Activated CD8-positive, alpha-beta T cell treated with anti-CD3 and anti-CD28 coated beads for 36 hours (primary cell): ENCODE measurements at regions of chr13 and their contacts with region 1.

Region 1: DNA sequence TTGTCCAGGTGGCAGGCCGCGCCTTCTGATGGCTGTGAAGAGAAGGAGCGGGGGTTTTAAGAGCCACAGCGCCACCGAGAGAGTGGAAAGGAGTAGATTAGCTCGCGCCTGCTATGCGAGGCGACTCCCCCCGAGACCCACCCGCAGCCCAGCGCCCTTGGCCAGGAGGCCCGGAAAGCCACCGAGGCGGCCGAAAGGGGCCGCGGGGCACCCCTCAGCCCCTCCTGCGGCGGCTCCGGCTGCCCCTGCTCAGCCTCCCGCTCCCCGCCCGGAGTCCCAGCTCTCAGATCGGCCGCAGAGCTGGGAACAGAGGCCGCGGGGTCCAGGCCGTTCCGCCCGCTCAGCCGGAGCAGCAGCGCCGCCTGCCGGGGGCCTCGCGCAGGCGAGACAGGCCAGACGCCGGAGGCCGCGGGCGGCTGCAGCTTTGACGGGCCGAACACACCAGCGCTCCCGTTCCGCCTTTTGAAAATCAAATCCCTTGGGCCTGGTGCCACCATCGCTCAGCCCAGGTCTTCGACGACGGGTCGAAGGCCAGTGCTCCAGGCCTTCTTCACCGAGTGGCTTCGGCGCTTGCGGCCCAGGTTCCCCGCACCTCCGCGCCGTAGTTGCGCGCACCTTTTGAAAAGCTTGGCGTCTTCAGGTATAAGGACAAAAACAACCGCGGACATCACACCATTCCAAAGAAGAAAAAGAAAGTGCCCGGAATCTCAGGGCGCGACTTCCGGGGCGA is 15.3 kb downstream of the CDX2 start:
- DNase-seq: peak; percentile 71
- ATAC-seq: peak; percentile 92
- H3K4me3 Mint-ChIP-seq: peak overlapping the region; percentile 69
- H3K27ac Mint-ChIP-seq: no peak overlapping the region
- H3K4me1 Mint-ChIP-seq: peaks cover 14% of the 10 kb centered on the region
- H3K27me3 Mint-ChIP-seq: peaks cover 64% of the 10 kb centered on the region
- CTCF ChIP-seq: peak; percentile 90

Region 2: DNA sequence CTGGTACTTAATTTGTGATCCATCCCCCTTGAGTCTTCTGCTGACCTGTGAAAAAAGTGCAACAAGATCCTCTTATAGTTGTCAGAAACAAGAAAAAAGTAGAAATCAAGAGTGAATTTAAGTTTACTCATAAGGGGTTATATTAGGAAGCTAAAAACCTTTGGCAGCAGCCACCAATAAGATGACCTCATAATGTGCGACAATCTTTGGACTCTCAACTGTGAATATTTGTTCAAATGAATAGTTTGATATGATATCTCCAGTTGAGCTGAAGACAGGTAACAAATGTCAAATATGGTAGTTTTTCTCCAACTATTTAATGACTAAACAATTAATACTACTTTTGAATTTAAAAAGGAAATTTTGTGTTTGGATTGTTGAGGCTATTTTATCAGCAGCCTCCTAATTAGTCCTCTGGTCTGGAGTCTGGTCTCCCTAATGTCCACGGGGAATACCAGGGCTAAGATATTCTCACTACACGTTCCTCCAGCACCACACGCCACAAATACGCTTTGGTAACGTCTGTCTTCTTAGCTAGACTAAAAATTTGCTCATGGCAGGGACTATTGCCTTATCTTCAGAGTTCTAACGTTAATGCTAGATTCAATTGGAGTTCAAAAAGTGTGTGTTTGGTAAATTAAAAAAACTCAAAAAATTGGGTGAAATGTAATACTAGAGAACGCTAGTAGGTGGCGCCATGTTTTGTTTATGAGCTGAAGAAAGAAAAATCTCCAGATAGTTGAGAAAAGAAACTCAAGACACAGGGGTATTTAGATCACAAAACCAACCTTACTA is 85.0 kb before region 1 on chr13:
- CTCF ChIA-PET with region 1: interaction called, 36 read pairs
- POLR2A ChIA-PET with region 1: no interaction called
- intact Hi-C with region 1: loop called (anchors 10 kb)
- DNase-seq: no peak
- ATAC-seq: no peak
- H3K4me3 Mint-ChIP-seq: no peak overlapping the region
- H3K27ac Mint-ChIP-seq: no peak overlapping the region
- H3K4me1 Mint-ChIP-seq: no peaks in the 10 kb centered on the region
- H3K27me3 Mint-ChIP-seq: peaks cover 22% of the 10 kb centered on the region
- CTCF ChIP-seq: peak; percentile 74

Region 3: DNA sequence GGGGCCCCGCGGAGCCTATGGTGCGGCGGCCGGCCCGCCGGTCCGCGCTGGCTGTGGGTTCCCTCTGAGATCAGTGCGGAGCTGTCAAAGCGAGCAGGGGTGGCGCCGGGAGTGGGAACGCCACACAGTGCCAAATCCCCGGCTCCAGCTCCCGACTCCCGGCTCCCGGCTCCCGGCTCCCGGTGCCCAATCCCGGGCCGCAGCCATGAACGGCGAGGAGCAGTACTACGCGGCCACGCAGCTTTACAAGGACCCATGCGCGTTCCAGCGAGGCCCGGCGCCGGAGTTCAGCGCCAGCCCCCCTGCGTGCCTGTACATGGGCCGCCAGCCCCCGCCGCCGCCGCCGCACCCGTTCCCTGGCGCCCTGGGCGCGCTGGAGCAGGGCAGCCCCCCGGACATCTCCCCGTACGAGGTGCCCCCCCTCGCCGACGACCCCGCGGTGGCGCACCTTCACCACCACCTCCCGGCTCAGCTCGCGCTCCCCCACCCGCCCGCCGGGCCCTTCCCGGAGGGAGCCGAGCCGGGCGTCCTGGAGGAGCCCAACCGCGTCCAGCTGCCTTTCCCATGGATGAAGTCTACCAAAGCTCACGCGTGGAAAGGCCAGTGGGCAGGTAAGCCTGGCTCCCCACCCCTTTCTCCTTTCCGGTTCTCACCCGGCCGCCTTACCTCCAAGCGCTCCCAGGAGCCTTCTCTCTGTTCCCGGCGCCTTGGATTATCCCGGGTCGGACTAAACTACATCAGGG is 33.7 kb before region 1 on chr13 and contains the start of gene PDX1:
- CTCF ChIA-PET with region 1: interaction called, 23 read pairs
- POLR2A ChIA-PET with region 1: no interaction called
- intact Hi-C with region 1: no loop called
- DNase-seq: peak; percentile 54
- ATAC-seq: peak; percentile 12
- H3K4me3 Mint-ChIP-seq: peak within 1 kb of the TSS; percentile 67
- H3K27ac Mint-ChIP-seq: no peak within 1 kb of the TSS
- H3K4me1 Mint-ChIP-seq: peaks cover 36% of the 10 kb centered on the region
- H3K27me3 Mint-ChIP-seq: peaks cover 77% of the 10 kb centered on the region
- CTCF ChIP-seq: no peak
- total RNA-seq, gene PDX1: not detected

Region 4: GRCh38 chr13:27926644-27927434 is 27.0 kb before region 1 on chr13:
- CTCF ChIA-PET with region 1: interaction called, 32 read pairs
- POLR2A ChIA-PET with region 1: interaction called, 5 read pairs
- intact Hi-C with region 1: no loop called
- DNase-seq: peak; percentile 24
- ATAC-seq: no peak
- H3K4me3 Mint-ChIP-seq: no peak overlapping the region
- H3K27ac Mint-ChIP-seq: no peak overlapping the region
- H3K4me1 Mint-ChIP-seq: peaks cover 30% of the 10 kb centered on the region
- H3K27me3 Mint-ChIP-seq: peaks cover 91% of the 10 kb centered on the region
- CTCF ChIP-seq: no peak

Region 5: GRCh38 chr13:27933580-27934328 is 20.1 kb before region 1 on chr13:
- CTCF ChIA-PET with region 1: interaction called, 32 read pairs
- POLR2A ChIA-PET with region 1: no interaction called
- intact Hi-C with region 1: no loop called
- DNase-seq: no peak
- ATAC-seq: no peak
- H3K4me3 Mint-ChIP-seq: no peak overlapping the region
- H3K27ac Mint-ChIP-seq: no peak overlapping the region
- H3K4me1 Mint-ChIP-seq: no peaks in the 10 kb centered on the region
- H3K27me3 Mint-ChIP-seq: peaks cover 30% of the 10 kb centered on the region
- CTCF ChIP-seq: no peak

Region 6: GRCh38 chr13:27968316-27969081 is 14.7 kb after region 1 on chr13:
- CTCF ChIA-PET with region 1: interaction called, 46 read pairs
- POLR2A ChIA-PET with region 1: no interaction called
- intact Hi-C with region 1: no loop called
- DNase-seq: no peak
- ATAC-seq: no peak
- H3K4me3 Mint-ChIP-seq: no peak overlapping the region
- H3K27ac Mint-ChIP-seq: no peak overlapping the region
- H3K4me1 Mint-ChIP-seq: peaks cover 22% of the 10 kb centered on the region
- H3K27me3 Mint-ChIP-seq: peaks cover 73% of the 10 kb centered on the region
- CTCF ChIP-seq: no peak

Region 7: GRCh38 chr13:27977476-27978300 is 23.8 kb after region 1 on chr13:
- CTCF ChIA-PET with region 1: interaction called, 46 read pairs
- POLR2A ChIA-PET with region 1: interaction called, 4 read pairs
- intact Hi-C with region 1: no loop called
- DNase-seq: no peak
- ATAC-seq: no peak
- H3K4me3 Mint-ChIP-seq: peak overlapping the region; percentile 29
- H3K27ac Mint-ChIP-seq: no peak overlapping the region
- H3K4me1 Mint-ChIP-seq: peaks cover 12% of the 10 kb centered on the region
- H3K27me3 Mint-ChIP-seq: peaks cover 84% of the 10 kb centered on the region
- CTCF ChIP-seq: no peak